ENCODE measurements at regions of chr1 and their contacts with region 1.

Region 1: GRCh38 chr1:100037927-100038659 is 68.3 kb downstream of the SLC35A3 start:
- DNase-seq: peak; percentile 88 to 90 (median 89)
- H3K4me3 ChIP-seq: peak overlapping the region; percentile 43 to 75
- H3K4me3 Mint-ChIP-seq: peak overlapping the region; percentile 91 to 100 (median 98)
- H3K27ac ChIP-seq: peak overlapping the region; percentile 99
- H3K27ac Mint-ChIP-seq: peak overlapping the region; percentile 98 to 100 (median 99)
- H3K4me1 ChIP-seq: peaks cover 50% of the 10 kb centered on the region
- H3K4me1 Mint-ChIP-seq: peaks cover 33 to 66% (median 46%) of the 10 kb centered on the region in 4 donors
- H3K27me3 ChIP-seq: no peaks in the 10 kb centered on the region
- H3K27me3 Mint-ChIP-seq: no peaks in the 10 kb centered on the region

Region 2: DNA sequence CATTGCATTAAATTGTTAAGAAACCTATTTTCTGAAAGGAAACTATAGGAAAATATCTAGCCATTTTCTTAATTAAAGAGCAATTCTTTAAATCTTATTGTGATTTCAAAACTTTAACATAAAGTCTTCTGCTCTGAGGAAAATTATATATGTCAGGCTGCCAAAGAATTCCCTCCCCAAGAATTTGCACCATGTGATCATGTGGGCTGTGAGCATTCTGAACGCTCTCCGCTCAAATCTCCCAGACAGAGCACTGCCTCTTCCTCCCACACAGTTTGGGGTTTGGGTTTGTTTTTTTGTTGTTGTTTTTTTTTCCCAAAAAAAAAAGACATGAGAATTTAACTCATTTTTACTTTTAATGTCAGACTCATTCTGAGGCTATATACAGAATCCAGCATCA is 548.1 kb before region 1 on chr1:
- CTCF ChIA-PET with region 1: no interaction called
- POLR2A ChIA-PET with region 1: no interaction called
- intact Hi-C with region 1: no loop called
- DNase-seq: no peak
- H3K4me3 ChIP-seq: no peak overlapping the region
- H3K4me3 Mint-ChIP-seq: no peak overlapping the region
- H3K27ac ChIP-seq: no peak overlapping the region
- H3K27ac Mint-ChIP-seq: no peak overlapping the region
- H3K4me1 ChIP-seq: no peaks in the 10 kb centered on the region
- H3K4me1 Mint-ChIP-seq: no peaks in the 10 kb centered on the region
- H3K27me3 ChIP-seq: no peaks in the 10 kb centered on the region
- H3K27me3 Mint-ChIP-seq: peaks cover 5% of the 10 kb centered on the region in 2 donors

Region 3: GRCh38 chr1:99849744-99850458 is 188.2 kb before region 1 on chr1 and contains the start of gene AGL:
- CTCF ChIA-PET with region 1: no interaction called
- POLR2A ChIA-PET with region 1: interaction called, 7 read pairs
- intact Hi-C with region 1: loop called (anchors 2 kb)
- DNase-seq: peak; percentile 87 to 89 (median 88)
- H3K4me3 ChIP-seq: peak within 1 kb of the TSS; percentile 61 to 92
- H3K4me3 Mint-ChIP-seq: peak within 1 kb of the TSS; percentile 97 to 99 (median 98)
- H3K27ac ChIP-seq: peak within 1 kb of the TSS; percentile 61
- H3K27ac Mint-ChIP-seq: peak within 1 kb of the TSS; percentile 87 to 97 (median 95)
- H3K4me1 ChIP-seq: peaks cover 18% of the 10 kb centered on the region
- H3K4me1 Mint-ChIP-seq: peaks cover 21 to 34% (median 26%) of the 10 kb centered on the region in 4 donors
- H3K27me3 ChIP-seq: no peaks in the 10 kb centered on the region
- H3K27me3 Mint-ChIP-seq: no peaks in the 10 kb centered on the region
- total RNA-seq, gene AGL: 19.0 to 20.5 TPM

Region 4: GRCh38 chr1:100019220-100019619 is 18.9 kb before region 1 on chr1:
- CTCF ChIA-PET with region 1: no interaction called
- POLR2A ChIA-PET with region 1: no interaction called
- intact Hi-C with region 1: no loop called
- DNase-seq: no peak
- H3K4me3 ChIP-seq: no peak overlapping the region
- H3K4me3 Mint-ChIP-seq: no peak overlapping the region
- H3K27ac ChIP-seq: no peak overlapping the region
- H3K27ac Mint-ChIP-seq: no peak overlapping the region
- H3K4me1 ChIP-seq: no peaks in the 10 kb centered on the region
- H3K4me1 Mint-ChIP-seq: peaks cover 0 to 2% (median 0%) of the 10 kb centered on the region in 4 donors
- H3K27me3 ChIP-seq: no peaks in the 10 kb centered on the region
- H3K27me3 Mint-ChIP-seq: no peaks in the 10 kb centered on the region

Region 5: DNA sequence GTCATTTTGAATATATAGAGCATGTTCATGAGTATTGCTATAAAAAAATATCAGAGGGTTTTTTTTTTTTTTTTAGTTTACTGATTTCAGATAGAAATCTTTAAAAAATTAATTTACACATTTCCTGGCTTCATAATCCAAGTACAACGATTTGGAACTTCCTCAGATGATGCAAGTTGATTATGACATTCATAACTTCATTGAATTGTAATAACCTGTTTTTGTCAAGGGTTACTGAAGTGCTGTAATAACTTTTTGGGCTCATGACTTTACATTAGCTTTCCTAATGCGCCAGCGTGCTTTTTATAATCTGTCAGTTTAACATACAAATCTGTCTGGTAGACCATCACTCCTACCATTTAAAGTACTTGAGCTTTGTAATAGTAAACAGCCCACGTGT is 13.3 kb after region 1 on chr1:
- CTCF ChIA-PET with region 1: no interaction called
- POLR2A ChIA-PET with region 1: interaction called, 7 read pairs
- intact Hi-C with region 1: loop called (anchors 1 kb)
- DNase-seq: no peak
- H3K4me3 ChIP-seq: no peak overlapping the region
- H3K4me3 Mint-ChIP-seq: peak overlapping the region in 1 of 8 donors; percentile 18
- H3K27ac ChIP-seq: no peak overlapping the region
- H3K27ac Mint-ChIP-seq: peak overlapping the region in 2 of 7 donors; percentile 35 to 57
- H3K4me1 ChIP-seq: peaks cover 37% of the 10 kb centered on the region
- H3K4me1 Mint-ChIP-seq: peaks cover 41 to 64% (median 54%) of the 10 kb centered on the region in 4 donors
- H3K27me3 ChIP-seq: no peaks in the 10 kb centered on the region
- H3K27me3 Mint-ChIP-seq: no peaks in the 10 kb centered on the region

Region 6: GRCh38 chr1:100249537-100250257 is 211.6 kb after region 1 on chr1 and contains the start of gene DBT:
- CTCF ChIA-PET with region 1: no interaction called
- POLR2A ChIA-PET with region 1: interaction called, 5 read pairs
- intact Hi-C with region 1: loop called (anchors 5 kb)
- DNase-seq: peak; percentile 88 to 96 (median 89)
- H3K4me3 ChIP-seq: peak within 1 kb of the TSS; percentile 93 to 95
- H3K4me3 Mint-ChIP-seq: no peak within 1 kb of the TSS
- H3K27ac ChIP-seq: peak within 1 kb of the TSS; percentile 76
- H3K27ac Mint-ChIP-seq: peak within 1 kb of the TSS in 1 of 7 donors; percentile 58
- H3K4me1 ChIP-seq: peaks cover 34% of the 10 kb centered on the region
- H3K4me1 Mint-ChIP-seq: peaks cover 11 to 20% (median 16%) of the 10 kb centered on the region in 4 donors
- H3K27me3 ChIP-seq: no peaks in the 10 kb centered on the region
- H3K27me3 Mint-ChIP-seq: no peaks in the 10 kb centered on the region
- total RNA-seq, gene DBT: 16.1 to 16.8 TPM

Region 7: GRCh38 chr1:100895540-100896483 is 857.7 kb after region 1 on chr1 and contains the start of gene SLC30A7:
- CTCF ChIA-PET with region 1: no interaction called
- POLR2A ChIA-PET with region 1: interaction called, 3 read pairs
- intact Hi-C with region 1: loop called (anchors 5 kb)
- DNase-seq: peak; percentile 93 to 98 (median 95)
- H3K4me3 ChIP-seq: peak within 1 kb of the TSS; percentile 96 to 98
- H3K4me3 Mint-ChIP-seq: peak within 1 kb of the TSS; percentile 94 to 100 (median 100)
- H3K27ac ChIP-seq: peak within 1 kb of the TSS; percentile 100
- H3K27ac Mint-ChIP-seq: peak within 1 kb of the TSS; percentile 99 to 100 (median 100)
- H3K4me1 ChIP-seq: peaks cover 44% of the 10 kb centered on the region
- H3K4me1 Mint-ChIP-seq: peaks cover 28 to 60% (median 39%) of the 10 kb centered on the region in 4 donors
- H3K27me3 ChIP-seq: no peaks in the 10 kb centered on the region
- H3K27me3 Mint-ChIP-seq: no peaks in the 10 kb centered on the region
- total RNA-seq, gene SLC30A7: 54.9 TPM